ENCODE measurements at regions of chrX and their contacts with region 1.

Region 1: DNA sequence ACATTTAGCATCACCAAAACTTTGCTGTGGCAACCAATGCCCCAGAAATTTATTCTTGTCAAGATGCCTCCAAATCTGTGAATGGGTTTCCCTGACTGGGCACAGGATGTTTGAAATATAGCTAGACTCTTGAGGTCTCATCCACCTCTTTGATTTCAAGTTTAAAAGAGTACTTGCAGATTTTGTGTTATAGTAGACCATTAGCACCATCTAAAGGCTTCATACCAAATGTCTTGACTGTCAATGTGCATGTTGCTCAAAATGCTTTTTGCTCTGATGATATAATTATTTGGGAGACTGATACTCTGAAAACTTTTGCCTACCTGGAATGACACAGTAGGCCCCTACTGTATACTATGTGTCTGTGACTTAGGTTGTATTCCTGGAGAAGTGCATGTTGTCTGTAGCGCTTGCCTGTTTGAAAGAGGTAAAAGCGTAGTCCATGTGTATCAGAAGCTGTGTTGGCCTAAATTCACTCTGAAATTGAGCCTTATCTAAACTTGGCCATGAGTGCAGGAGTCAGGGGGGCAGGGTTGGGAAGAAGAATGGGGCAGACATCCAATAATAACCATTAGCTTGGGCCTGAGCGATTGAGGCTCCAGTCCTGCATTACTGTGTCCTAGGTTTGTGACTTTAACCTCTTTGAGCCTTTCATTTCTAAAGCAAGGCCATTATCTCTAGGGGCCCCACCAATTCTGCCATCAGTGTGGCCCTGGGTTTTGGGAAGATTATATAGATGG is 33.8 kb downstream of the NDP start:
- DNase-seq: no peak
- ATAC-seq: peak in 1 of 2 donors; percentile 44

Region 2: GRCh38 chrX:43108828-43109227 is 830.5 kb before region 1 on chrX:
- intact Hi-C with region 1: no loop called
- DNase-seq: no peak
- ATAC-seq: no peak

Region 3: GRCh38 chrX:43813898-43814297 is 125.5 kb before region 1 on chrX:
- intact Hi-C with region 1: no loop called
- DNase-seq: no peak
- ATAC-seq: peak; percentile 42 to 66

Region 4: DNA sequence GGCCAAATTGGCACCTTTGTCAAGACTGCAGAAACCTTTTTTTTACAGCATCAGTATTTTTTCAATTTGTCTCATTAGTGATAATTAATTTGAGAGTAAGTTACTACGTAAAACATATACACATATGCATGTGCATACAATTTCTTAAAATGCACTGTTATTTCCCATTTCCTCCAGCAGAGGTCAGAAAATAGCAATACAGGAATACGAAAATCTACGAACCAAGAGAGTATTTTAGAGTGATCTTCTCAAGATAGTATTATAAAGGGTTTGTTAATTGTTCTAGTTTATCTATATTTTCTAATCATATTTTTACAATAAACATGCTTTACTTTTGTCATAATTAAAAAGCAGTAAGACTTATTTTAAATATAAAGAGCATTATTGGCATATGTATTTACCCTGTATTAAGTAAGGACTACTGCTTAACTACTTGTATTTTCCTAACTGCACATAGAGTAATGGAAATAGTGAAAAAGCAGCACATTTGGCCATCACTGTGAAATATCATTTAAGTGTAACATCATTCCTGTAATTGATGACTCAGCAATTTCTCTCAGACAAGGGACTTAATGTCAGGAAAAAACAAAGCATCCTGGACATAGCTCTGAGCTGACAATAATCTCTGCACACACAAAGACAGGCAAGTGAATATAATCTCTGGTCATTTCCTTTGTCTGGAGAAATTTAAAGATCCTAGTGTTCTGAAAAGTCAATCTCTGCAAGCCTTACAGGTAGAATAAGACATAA is 102.7 kb before region 1 on chrX:
- intact Hi-C with region 1: loop called (anchors 2 to 10 kb)
- DNase-seq: no peak
- ATAC-seq: no peak

Region 5: GRCh38 chrX:45110494-45110893 is 1171.1 kb after region 1 on chrX:
- intact Hi-C with region 1: no loop called
- DNase-seq: no peak
- ATAC-seq: no peak